CD8-positive, alpha-beta memory T cell (primary cell): ENCODE measurements at regions of chr16 and their contacts with region 1.

Region 1: GRCh38 chr16:69123910-69124309 is 8.5 kb downstream of the CHTF8 start:
- DNase-seq: peak; percentile 53 to 73 (median 56)
- H3K4me3 ChIP-seq: no peak overlapping the region
- H3K4me3 Mint-ChIP-seq: peak overlapping the region in 1 of 7 donors; percentile 36
- H3K27ac ChIP-seq: no peak overlapping the region
- H3K27ac Mint-ChIP-seq: peak overlapping the region in 4 of 8 donors; percentile 3 to 70 (median 28)
- H3K4me1 ChIP-seq: no peaks in the 10 kb centered on the region
- H3K4me1 Mint-ChIP-seq: peaks cover 16 to 48% (median 28%) of the 10 kb centered on the region in 3 donors
- H3K27me3 ChIP-seq: no peaks in the 10 kb centered on the region
- H3K27me3 Mint-ChIP-seq: no peaks in the 10 kb centered on the region

Region 2: DNA sequence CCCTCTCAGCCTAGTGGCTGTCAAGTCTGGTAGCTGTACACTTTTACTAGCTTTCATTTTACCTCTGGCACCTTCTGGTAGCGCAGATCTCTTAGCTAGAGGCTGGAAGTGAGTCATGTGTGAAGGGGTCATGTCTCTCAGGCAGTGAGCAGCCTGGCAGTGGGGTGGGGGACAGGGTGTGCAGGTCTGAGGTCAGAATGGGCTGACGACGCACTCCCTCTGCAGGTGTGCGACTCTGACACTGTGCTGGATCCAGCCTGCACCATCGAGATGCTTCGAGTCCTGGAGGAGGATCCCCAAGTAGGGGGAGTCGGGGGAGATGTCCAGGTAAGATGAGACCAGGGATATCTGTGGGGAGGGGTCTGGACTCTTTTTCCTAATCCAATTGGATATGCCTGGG is 10.7 kb before region 1 on chr16:
- CTCF ChIA-PET with region 1: interaction called, 12 read pairs
- POLR2A ChIA-PET with region 1: no interaction called
- DNase-seq: no peak
- H3K4me3 ChIP-seq: no peak overlapping the region
- H3K4me3 Mint-ChIP-seq: no peak overlapping the region
- H3K27ac ChIP-seq: no peak overlapping the region
- H3K27ac Mint-ChIP-seq: peak overlapping the region in 1 of 8 donors; percentile 50
- H3K4me1 ChIP-seq: no peaks in the 10 kb centered on the region
- H3K4me1 Mint-ChIP-seq: peaks cover 4 to 12% (median 7%) of the 10 kb centered on the region in 3 donors
- H3K27me3 ChIP-seq: no peaks in the 10 kb centered on the region
- H3K27me3 Mint-ChIP-seq: peaks cover 7 to 8% of the 10 kb centered on the region in 2 donors

Region 3: DNA sequence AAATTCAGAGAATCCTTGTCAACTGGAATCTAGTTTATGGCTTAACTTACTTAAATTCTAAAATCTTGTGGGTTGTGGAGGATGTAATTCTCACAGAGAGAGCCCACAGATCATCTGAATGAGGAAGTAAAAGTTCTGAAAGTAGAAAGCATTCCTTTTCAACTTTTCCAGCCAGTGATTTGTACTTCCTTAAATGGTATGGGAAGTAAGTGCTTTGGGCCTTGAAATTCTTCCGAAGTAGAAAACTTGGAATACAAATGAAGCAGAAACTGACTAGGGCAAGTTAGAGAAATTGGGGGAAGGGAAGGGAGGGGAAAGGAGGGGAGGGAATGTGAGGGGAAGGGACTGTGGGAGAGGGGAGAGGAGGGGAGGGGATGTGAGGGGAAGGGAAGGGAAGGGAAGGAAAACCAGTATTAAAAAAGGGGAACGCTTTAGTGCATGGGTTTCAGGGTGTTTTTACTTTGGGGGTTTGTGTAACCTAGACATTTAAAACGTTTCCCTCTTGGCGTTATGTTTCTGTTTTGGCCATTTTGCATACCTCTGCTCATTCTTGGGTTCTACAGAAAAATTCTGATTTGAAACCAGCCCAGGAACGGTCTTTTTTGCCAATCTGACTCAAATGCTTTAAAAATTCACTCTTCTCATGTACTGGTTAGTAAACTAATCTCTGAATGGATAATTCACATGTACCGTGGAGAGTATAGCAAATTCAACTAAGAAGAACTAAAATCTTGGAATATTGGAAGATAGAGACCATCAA is 47.6 kb after region 1 on chr16:
- CTCF ChIA-PET with region 1: no interaction called
- POLR2A ChIA-PET with region 1: no interaction called
- DNase-seq: no peak
- H3K4me3 ChIP-seq: no peak overlapping the region
- H3K4me3 Mint-ChIP-seq: no peak overlapping the region
- H3K27ac ChIP-seq: no peak overlapping the region
- H3K27ac Mint-ChIP-seq: peak overlapping the region in 1 of 8 donors; percentile 51
- H3K4me1 ChIP-seq: peaks cover 4% of the 10 kb centered on the region
- H3K4me1 Mint-ChIP-seq: peaks cover 14 to 24% (median 21%) of the 10 kb centered on the region in 3 donors
- H3K27me3 ChIP-seq: no peaks in the 10 kb centered on the region
- H3K27me3 Mint-ChIP-seq: no peaks in the 10 kb centered on the region